ENCODE measurements at regions of chr13 and their contacts with region 1.

Region 1: GRCh38 chr13:26985285-26985878 is 186.2 kb downstream of the USP12 start:
- DNase-seq: peak; percentile 47
- ATAC-seq: peak; percentile 78

Region 2: DNA sequence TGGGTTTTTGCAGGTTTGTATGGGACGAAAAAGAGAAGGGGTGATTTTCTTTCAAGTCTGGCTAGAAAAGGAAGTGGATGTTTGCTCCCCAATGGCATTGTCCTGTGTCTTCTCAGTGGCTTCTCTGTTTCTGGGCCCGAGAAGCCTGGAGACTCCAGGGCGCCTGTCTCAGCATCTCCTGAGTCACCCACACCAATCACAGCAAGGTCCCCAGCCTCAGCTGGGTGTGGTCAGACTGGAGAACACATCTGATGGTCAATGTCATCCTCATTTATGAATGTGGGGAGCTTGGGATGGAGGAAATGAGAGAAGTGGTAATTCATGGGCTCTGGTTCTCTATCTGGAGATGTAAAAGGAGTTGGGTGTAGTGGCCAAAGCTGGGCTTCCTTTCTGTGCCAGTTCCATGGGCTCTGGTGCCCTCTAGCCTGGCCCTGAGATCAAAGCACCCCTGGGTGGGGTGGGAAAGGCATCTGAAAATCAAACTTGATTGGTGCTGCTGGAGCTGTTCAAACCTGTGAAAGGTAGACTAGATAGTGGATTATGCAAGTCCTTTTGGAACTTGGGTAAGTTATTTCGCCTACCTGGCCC is 298.6 kb after region 1 on chr13:
- intact Hi-C with region 1: loop called (anchors 5 kb)
- DNase-seq: no peak
- ATAC-seq: peak; percentile 85

Region 3: DNA sequence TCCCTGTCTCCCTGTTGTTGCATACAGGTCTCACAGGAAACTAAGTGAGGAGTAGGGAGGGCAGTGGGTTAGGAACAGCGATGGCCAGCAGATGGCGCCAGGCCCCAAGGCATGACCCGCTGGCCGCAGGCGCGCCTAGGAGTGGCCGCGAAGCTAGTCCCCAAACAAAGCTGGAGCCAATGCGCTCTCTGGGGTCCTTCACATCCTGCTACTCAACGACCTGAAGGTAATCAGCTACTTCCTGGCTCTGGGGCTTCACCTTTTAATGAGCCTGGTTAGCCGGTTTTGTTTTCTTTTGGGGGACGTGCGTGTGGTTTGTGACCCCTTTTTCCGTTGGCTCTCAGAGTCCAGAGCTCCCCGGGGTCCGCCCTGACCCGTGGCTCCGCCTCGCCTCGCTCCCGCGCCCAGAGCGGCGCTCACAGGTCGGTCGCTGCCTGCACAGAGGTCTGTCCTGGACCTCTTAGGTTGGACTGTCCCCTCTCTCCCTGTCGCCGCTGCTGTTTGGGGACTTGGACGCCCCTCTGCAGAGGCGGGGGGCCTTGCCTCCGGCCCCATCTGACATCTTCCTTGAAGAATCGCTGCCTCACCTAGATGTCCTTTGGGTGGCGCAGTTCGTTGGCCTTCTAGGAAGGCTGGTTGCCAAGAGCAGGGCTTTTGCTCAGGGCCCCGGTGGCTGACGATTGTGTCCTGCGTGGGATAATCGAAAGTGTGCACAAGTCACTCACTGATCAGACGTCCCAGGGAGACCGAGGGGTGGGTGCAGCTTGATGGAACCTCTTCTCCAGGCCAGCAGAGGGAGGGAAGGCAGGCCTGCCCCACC is 376.9 kb after region 1 on chr13:
- intact Hi-C with region 1: loop called (anchors 2 kb)
- DNase-seq: peak; percentile 92
- ATAC-seq: peak; percentile 96